Activated B cell treated with CpG ODN at 0.5 μM for 24 hours (primary cell): ENCODE measurements at regions of chr19 and their contacts with region 1.

Region 1: GRCh38 chr19:16417660-16418596 is 53.8 kb downstream of the EPS15L1 start:
- DNase-seq: peak; percentile 80
- ATAC-seq: peak; percentile 92
- H3K4me3 Mint-ChIP-seq: peak overlapping the region; percentile 61
- H3K27ac Mint-ChIP-seq: peak overlapping the region; percentile 83
- H3K4me1 Mint-ChIP-seq: peaks cover 37% of the 10 kb centered on the region
- H3K27me3 Mint-ChIP-seq: no peaks in the 10 kb centered on the region
- CTCF ChIP-seq: peak; percentile 87

Region 2: DNA sequence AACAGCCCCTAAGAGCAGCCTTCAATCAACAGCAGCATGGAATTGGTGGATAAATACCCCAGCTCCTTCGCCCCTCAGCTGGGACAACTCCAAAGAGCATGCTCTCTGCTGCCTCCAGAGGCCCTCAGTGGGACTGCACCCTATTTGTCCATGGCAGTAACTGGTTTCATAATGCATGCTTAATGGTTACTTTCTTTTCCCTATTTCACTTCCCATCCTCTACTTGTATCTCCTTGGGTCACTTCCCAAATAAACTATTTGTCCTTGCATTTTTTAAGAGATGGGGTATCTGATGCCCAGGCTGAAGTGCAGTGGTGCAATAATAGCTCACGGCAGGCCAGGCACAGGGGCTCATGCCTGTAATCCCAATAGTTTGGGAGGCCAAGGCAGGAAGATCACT is 355.1 kb before region 1 on chr19:
- CTCF ChIA-PET with region 1: interaction called, 4 read pairs
- POLR2A ChIA-PET with region 1: no interaction called
- intact Hi-C with region 1: loop called (anchors 1 kb)
- DNase-seq: peak; percentile 63
- ATAC-seq: peak; percentile 92
- H3K4me3 Mint-ChIP-seq: no peak overlapping the region
- H3K27ac Mint-ChIP-seq: no peak overlapping the region
- H3K4me1 Mint-ChIP-seq: peaks cover 10% of the 10 kb centered on the region
- H3K27me3 Mint-ChIP-seq: peaks cover 3% of the 10 kb centered on the region
- CTCF ChIP-seq: peak; percentile 80

Region 3: DNA sequence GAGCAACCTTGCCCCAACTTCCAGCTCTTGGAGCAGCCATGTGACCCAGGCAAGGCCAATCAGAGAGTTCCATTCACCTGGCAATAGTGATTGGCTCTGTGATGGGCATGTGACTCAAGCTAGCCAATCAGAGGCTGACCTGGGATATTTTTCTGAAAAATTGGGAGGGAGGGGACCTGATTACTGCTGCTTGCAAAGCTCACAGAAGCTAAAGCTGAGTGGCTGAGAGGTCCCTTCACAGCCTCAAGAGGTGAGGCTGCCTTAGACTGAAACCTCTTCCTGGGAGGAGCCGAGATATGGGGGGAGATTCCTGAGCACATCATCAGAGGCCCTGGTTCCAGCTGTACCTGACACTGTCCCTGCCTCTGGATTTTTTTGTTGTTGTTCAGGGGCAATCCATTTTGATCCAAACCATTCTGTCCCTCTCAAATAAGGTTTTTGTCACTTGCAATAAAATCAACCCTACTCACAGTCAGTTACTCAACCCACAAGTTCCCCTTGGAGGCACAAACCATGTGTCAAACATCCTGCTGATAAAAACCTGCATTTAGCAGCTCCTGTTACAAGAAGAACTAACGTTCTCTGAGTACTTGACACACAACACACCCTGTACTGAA is 249.4 kb before region 1 on chr19:
- CTCF ChIA-PET with region 1: no interaction called
- POLR2A ChIA-PET with region 1: no interaction called
- intact Hi-C with region 1: no loop called
- DNase-seq: no peak
- ATAC-seq: peak; percentile 74
- H3K4me3 Mint-ChIP-seq: no peak overlapping the region
- H3K27ac Mint-ChIP-seq: peak overlapping the region; percentile 61
- H3K4me1 Mint-ChIP-seq: peaks cover 22% of the 10 kb centered on the region
- H3K27me3 Mint-ChIP-seq: no peaks in the 10 kb centered on the region
- CTCF ChIP-seq: no peak

Region 4: GRCh38 chr19:16247353-16248182 is 170.4 kb before region 1 on chr19:
- CTCF ChIA-PET with region 1: interaction called, 83 read pairs
- POLR2A ChIA-PET with region 1: interaction called, 34 read pairs
- intact Hi-C with region 1: loop called (anchors 1 kb)
- DNase-seq: peak; percentile 85
- ATAC-seq: peak; percentile 88
- H3K4me3 Mint-ChIP-seq: peak overlapping the region; percentile 17
- H3K27ac Mint-ChIP-seq: peak overlapping the region; percentile 32
- H3K4me1 Mint-ChIP-seq: peaks cover 41% of the 10 kb centered on the region
- H3K27me3 Mint-ChIP-seq: no peaks in the 10 kb centered on the region
- CTCF ChIP-seq: peak; percentile 33

Region 5: DNA sequence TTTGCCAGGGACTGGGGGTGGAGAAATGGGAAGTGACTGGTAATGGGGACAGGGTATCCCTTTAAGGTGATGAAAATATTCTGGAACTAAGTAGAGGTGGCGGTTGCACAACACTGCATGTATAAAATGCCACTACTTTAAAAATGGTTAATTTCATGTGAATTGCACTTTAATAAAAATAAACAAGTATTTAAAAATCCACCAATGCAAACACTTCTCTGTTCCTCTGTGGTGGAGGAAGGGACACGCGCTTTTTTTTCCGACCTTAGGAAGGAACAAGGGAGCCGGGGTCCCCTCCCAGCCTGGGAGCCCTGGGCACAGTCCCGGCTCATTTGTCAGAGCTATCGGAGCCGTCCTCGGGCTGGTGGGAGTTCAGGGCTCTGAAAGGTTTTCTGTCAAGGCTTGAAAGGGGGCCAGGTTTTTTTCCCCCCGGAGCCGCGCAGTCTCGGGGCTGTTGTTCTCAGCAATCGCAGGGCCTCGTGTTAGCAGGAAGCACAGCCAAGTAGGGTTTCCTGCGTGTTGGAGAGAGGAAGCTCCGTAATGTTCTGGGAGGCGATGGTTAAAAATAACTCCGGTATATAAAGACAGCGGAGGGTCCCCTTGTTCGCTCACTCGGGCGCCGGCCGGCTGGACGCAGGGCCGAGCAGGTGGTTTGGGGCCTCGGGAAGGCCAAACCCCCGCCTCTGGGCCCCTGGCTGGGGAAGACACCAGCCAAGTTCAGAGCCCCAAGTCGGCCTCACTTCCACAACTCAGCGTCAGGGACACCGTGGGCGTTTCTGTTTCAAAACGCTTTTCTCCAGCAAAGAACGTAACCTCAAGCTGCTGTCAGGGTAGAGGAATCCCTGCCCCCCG is 134.5 kb before region 1 on chr19:
- CTCF ChIA-PET with region 1: no interaction called
- POLR2A ChIA-PET with region 1: interaction called, 10 read pairs
- intact Hi-C with region 1: no loop called
- DNase-seq: peak; percentile 41
- ATAC-seq: peak; percentile 83
- H3K4me3 Mint-ChIP-seq: peak overlapping the region; percentile 66
- H3K27ac Mint-ChIP-seq: peak overlapping the region; percentile 78
- H3K4me1 Mint-ChIP-seq: peaks cover 51% of the 10 kb centered on the region
- H3K27me3 Mint-ChIP-seq: no peaks in the 10 kb centered on the region
- CTCF ChIP-seq: no peak

Region 6: DNA sequence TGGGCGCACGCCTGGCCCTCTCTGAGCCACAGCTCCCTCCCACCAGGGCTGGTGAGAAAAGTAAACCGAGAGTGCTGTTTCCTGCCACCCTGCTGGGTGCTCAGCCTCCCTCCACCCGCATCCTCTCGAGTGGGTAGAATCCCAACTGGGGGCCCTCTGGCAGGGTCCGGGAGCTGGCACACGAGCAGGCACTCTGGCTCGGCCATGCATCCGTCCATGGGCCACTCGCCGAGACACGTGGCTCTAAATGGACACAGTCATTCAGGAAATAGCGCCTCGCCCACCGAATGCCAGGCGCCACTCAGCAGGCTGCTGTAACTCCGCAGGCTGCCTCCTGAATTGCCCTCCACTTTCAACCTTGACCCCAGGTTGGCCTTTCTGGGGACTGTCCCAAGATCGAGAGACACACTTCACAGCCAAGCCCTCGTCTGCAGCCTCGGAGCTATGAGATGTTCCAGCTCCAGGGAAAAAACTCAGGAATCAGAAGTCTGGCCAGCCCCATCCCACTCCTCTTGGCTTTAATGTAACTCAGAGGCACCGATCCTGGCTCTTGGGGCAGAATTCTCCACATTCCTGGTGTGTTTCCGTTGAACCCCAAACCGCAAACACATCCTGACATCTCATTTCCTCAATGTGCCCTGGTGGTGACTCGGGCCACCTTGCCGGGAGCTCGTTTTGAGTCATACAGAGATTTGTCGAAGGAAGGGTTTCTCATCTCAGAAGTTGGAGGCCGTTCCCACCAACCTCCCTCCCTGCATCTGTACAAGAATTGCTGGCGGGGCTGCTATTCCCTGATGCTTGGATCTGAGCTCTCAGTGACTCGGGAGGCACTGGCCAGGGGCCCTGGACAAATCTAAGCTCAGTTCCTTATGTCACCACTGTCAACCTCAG is 79.2 kb before region 1 on chr19:
- CTCF ChIA-PET with region 1: interaction called, 9 read pairs
- POLR2A ChIA-PET with region 1: interaction called, 6 read pairs
- intact Hi-C with region 1: loop called (anchors 1 kb)
- DNase-seq: no peak
- ATAC-seq: peak; percentile 19
- H3K4me3 Mint-ChIP-seq: peak overlapping the region; percentile 76
- H3K27ac Mint-ChIP-seq: peak overlapping the region; percentile 75
- H3K4me1 Mint-ChIP-seq: peaks cover 64% of the 10 kb centered on the region
- H3K27me3 Mint-ChIP-seq: no peaks in the 10 kb centered on the region
- CTCF ChIP-seq: no peak

Region 7: GRCh38 chr19:16397791-16398471 is 20.0 kb before region 1 on chr19:
- CTCF ChIA-PET with region 1: interaction called, 6 read pairs
- POLR2A ChIA-PET with region 1: interaction called, 9 read pairs
- intact Hi-C with region 1: loop called (anchors 1 kb)
- DNase-seq: no peak
- ATAC-seq: no peak
- H3K4me3 Mint-ChIP-seq: peak overlapping the region; percentile 59
- H3K27ac Mint-ChIP-seq: peak overlapping the region; percentile 91
- H3K4me1 Mint-ChIP-seq: peaks cover 77% of the 10 kb centered on the region
- H3K27me3 Mint-ChIP-seq: no peaks in the 10 kb centered on the region
- CTCF ChIP-seq: no peak

Region 8: GRCh38 chr19:16518483-16519229 is 100.7 kb after region 1 on chr19:
- CTCF ChIA-PET with region 1: no interaction called
- POLR2A ChIA-PET with region 1: no interaction called
- intact Hi-C with region 1: no loop called
- DNase-seq: no peak
- ATAC-seq: no peak
- H3K4me3 Mint-ChIP-seq: no peak overlapping the region
- H3K27ac Mint-ChIP-seq: no peak overlapping the region
- H3K4me1 Mint-ChIP-seq: no peaks in the 10 kb centered on the region
- H3K27me3 Mint-ChIP-seq: no peaks in the 10 kb centered on the region
- CTCF ChIP-seq: no peak